GM10248 (cell line): ENCODE measurements at regions of chr5 and their contacts with region 1.

Region 1: GRCh38 chr5:177454397-177455035 is 7.9 kb downstream of the PRR7 start:
- DNase-seq: peak; percentile 95
- CTCF ChIP-seq: peak; percentile 90

Region 2: DNA sequence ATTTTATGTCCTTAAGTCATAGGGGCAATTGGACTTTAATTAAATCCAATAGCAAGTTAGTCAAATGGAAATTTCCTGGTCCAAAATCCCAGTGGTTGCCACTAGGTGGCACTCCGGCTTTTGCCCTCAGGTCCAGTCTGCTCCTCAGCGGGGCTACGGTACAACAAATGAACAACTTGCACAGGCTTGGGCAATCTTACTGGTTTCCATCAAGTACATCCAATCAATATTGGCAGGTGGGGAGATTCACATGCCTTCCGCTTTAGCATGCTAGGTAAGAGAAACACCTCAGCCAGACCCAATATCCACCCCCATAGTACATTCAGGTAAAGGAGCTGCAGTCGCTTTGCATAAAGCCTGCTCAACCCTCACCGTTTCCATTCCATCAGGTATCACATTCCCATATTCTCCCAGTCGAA is 136.5 kb before region 1 on chr5:
- CTCF ChIA-PET with region 1: interaction called, 64 read pairs
- POLR2A ChIA-PET with region 1: no interaction called
- DNase-seq: peak; percentile 70
- CTCF ChIP-seq: peak; percentile 85

Region 3: DNA sequence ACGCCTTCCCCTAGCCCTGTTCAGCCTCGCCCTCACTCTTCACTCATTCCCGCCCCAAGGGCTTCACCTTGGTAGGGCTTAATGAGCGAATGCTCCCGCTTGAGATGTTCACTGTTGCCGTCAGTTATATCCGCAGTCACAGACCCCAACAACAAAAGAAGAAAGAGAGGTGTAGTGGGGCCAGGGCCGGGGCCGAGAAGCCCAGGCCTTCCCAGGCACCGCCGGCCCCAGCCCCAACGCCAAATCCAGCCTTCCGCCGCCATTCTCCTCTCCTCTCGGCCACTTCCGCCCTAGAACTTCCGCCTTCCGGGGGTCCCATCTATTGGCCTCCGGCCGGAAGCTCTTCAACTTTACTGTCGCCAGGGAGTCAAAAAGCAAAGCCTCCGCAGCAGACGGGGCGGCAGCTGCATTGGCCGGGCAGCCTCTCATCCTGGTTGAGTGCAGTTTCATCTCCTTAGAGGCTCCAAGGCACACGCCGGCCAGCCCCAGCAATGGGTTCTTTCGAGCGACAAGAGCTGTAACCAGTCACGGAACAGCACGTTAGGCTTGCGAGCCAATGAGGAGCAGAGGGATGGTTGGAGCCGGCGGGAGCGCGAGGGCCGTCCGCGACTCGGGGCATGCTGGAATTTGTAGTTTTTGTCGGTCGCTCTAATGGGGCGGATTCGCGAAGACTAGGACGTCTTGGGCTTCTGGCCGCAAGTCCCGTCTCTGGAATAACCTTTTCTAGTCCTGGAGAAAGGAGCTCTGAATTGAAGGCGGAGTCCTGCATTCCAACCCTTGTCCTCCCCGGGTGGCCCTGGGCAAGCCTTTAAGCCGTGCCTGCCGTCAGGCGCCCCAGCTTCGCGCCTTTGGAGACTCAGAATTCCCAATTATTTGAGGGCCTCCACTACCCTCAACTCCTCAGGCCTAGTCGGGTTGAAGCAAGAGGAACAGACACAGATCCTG is 102.9 kb before region 1 on chr5 and contains the start of gene LMAN2:
- CTCF ChIA-PET with region 1: interaction called, 23 read pairs
- POLR2A ChIA-PET with region 1: no interaction called
- DNase-seq: peak; percentile 94
- CTCF ChIP-seq: no peak

Region 4: DNA sequence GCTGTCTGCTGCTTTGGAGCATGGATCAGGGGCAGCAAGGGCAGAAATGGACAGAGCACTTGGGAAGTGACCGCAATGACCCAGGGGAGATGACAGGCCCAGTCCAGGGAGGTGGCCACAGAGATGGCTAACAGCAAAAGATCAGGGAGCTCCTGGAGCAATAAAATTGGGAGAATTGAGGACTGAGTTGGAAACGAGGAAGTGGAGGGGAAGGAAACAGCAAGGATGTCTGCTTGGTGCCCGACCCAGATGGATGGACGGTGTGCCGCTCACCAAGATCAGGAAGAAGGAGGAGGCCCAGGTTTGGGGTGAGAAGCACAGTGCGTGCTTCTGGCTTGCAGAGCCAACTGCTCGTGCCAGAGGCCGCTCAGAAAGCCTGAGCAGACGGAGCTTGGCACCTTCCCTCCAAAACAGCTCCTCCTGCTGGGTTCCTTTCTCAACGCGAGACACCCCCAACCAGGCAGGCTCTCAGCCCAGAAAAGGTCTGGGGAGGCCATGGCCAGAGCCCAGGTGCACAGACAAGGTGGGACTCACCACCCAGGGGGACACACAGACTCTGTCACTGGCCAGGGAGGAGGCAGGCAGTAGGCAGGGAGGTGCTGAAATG is 72.0 kb before region 1 on chr5:
- CTCF ChIA-PET with region 1: interaction called, 10 read pairs
- POLR2A ChIA-PET with region 1: interaction called, 3 read pairs
- DNase-seq: no peak
- CTCF ChIP-seq: peak; percentile 25

Region 5: GRCh38 chr5:177425801-177426565 is 28.5 kb before region 1 on chr5:
- CTCF ChIA-PET with region 1: interaction called, 103 read pairs
- POLR2A ChIA-PET with region 1: interaction called, 6 read pairs
- DNase-seq: peak; percentile 97
- CTCF ChIP-seq: no peak

Region 6: GRCh38 chr5:177473461-177474001 is 19.0 kb after region 1 on chr5 and contains the start of gene DBN1:
- CTCF ChIA-PET with region 1: interaction called, 123 read pairs
- POLR2A ChIA-PET with region 1: interaction called, 3 read pairs
- DNase-seq: peak; percentile 87
- CTCF ChIP-seq: no peak

Region 7: GRCh38 chr5:177497292-177498033 is 42.9 kb after region 1 on chr5 and contains the start of gene PDLIM7:
- CTCF ChIA-PET with region 1: interaction called, 115 read pairs
- POLR2A ChIA-PET with region 1: no interaction called
- DNase-seq: peak; percentile 97
- CTCF ChIP-seq: no peak